AG04449 (cell line): ENCODE measurements at regions of chr2 and their contacts with region 1.

Region 1: DNA sequence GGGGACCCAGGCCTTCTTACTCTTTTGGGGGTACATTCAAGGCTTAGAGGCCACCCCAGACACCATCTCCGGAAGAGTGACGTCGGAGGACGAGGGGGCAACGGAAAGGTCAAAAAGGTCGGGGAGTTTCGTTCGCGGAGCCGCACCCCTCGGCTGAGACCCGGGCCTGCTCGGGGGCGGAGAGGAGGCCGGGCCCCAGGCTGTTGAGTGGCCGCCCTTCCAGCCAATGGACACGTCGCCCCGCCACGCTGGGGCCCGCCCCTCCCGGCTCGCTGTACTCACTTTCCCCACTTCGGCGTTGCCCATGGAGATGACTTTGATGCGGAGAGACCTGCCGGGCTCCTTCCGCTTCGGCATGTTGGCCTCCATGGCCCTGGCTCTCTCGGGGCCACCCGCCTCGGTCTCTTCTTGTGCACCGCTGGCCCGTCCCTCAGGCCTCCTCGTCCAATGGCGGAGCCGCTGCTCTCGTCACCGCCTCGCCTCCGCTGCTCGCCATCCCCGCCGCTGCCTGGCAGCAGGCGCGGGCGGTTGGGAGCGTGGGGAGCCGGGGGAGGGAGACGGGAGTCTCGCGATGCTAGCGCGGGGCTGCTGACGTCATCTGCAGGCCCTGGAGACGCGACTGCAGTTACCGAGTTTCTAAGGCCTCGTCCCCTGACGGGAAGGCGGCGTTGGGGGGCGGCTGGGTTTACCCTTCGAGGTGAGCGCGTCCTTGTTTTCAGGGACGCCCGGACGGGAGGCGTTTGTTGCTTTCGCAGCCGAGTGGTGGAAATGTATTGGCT is at the start of gene DNAJC27:
- DNase-seq: peak; percentile 87
- H3K4me3 ChIP-seq: peak within 1 kb of the TSS; percentile 89
- CTCF ChIP-seq: no peak

Region 2: GRCh38 chr2:24409700-24410556 is 561.8 kb before region 1 on chr2:
- CTCF ChIA-PET with region 1: interaction called, 12 read pairs
- POLR2A ChIA-PET with region 1: no interaction called
- DNase-seq: peak; percentile 17
- H3K4me3 ChIP-seq: no peak overlapping the region
- CTCF ChIP-seq: peak; percentile 73

Region 3: GRCh38 chr2:25000503-25001324 is 29.0 kb after region 1 on chr2:
- CTCF ChIA-PET with region 1: interaction called, 56 read pairs
- POLR2A ChIA-PET with region 1: no interaction called
- DNase-seq: no peak
- H3K4me3 ChIP-seq: no peak overlapping the region
- CTCF ChIP-seq: no peak

Region 4: GRCh38 chr2:25131567-25132298 is 160.0 kb after region 1 on chr2:
- CTCF ChIA-PET with region 1: interaction called, 650 read pairs
- POLR2A ChIA-PET with region 1: interaction called, 3 read pairs
- DNase-seq: no peak
- H3K4me3 ChIP-seq: no peak overlapping the region
- CTCF ChIP-seq: no peak

Region 5: DNA sequence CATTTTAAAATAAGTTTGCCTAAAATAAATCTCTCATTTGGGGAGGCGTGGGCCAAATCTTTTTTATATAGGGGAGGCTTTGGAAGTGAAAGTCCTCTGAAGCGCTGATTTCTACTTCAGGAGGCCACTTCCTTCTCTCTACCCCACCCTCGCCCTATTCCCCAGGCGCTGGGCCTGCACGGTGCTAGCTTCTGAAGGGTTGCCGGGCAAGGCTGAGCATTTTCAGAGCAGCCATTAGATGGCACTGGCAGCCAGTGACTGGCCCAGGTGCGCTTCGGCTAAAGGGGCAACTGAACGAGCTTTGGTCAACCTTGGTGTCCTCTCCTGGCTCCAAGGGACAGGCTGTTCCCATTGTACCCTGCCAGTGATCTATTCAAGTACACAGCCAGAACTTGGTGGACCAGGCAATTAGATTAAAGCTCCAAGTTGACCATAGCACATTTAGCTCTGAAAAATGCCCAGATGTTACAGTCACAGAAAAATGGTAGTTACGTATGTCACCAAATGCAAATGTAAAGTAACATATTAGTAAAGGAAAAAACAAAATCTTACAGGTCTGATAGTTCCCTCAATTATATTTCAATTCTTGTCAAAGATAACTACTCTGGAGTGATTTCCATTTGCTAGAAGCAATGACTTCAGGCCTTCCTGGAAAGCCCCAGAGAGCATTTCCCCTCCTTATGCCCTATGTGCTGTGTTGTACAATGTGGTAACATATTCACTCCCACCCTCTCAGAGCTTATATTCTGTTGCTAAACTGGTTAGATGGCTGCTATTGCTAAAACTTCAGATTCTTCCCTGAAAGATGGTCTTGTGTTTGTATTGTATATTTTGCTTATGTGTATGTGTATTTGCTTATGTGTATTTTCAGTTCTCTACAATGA is 194.5 kb after region 1 on chr2:
- CTCF ChIA-PET with region 1: interaction called, 21 read pairs
- POLR2A ChIA-PET with region 1: no interaction called
- DNase-seq: no peak
- H3K4me3 ChIP-seq: no peak overlapping the region
- CTCF ChIP-seq: peak; percentile 20

Region 6: GRCh38 chr2:25228848-25229278 is 257.1 kb after region 1 on chr2:
- CTCF ChIA-PET with region 1: interaction called, 18 read pairs
- POLR2A ChIA-PET with region 1: no interaction called
- DNase-seq: no peak
- H3K4me3 ChIP-seq: no peak overlapping the region
- CTCF ChIP-seq: peak; percentile 80